Transverse colon (tissue), 4 donors: ENCODE measurements at regions of chr13 and their contacts with region 1.

Region 1: GRCh38 chr13:45047394-45048310 is 58.3 kb downstream of the GPALPP1 start:
- DNase-seq: peak; percentile 84
- H3K4me3 ChIP-seq: peak overlapping the region in 3 of 4 donors; percentile 34 to 53 (median 37)
- H3K27ac ChIP-seq: no peak overlapping the region
- H3K4me1 ChIP-seq: peaks cover 0 to 13% (median 4%) of the 10 kb centered on the region in 4 donors
- H3K27me3 ChIP-seq: no peaks in the 10 kb centered on the region
- CTCF ChIP-seq: peak; percentile 76 to 96 (median 86)
- EP300 ChIP-seq: no peak
- POLR2A ChIP-seq: no peak

Region 2: GRCh38 chr13:44938854-44939253 is 108.8 kb before region 1 on chr13:
- in situ Hi-C with region 1: no loop called
- intact Hi-C with region 1: no loop called
- DNase-seq: no peak
- H3K4me3 ChIP-seq: no peak overlapping the region
- H3K27ac ChIP-seq: no peak overlapping the region
- H3K4me1 ChIP-seq: no peaks in the 10 kb centered on the region
- H3K27me3 ChIP-seq: no peaks in the 10 kb centered on the region
- CTCF ChIP-seq: no peak
- EP300 ChIP-seq: no peak
- POLR2A ChIP-seq: no peak

Region 3: DNA sequence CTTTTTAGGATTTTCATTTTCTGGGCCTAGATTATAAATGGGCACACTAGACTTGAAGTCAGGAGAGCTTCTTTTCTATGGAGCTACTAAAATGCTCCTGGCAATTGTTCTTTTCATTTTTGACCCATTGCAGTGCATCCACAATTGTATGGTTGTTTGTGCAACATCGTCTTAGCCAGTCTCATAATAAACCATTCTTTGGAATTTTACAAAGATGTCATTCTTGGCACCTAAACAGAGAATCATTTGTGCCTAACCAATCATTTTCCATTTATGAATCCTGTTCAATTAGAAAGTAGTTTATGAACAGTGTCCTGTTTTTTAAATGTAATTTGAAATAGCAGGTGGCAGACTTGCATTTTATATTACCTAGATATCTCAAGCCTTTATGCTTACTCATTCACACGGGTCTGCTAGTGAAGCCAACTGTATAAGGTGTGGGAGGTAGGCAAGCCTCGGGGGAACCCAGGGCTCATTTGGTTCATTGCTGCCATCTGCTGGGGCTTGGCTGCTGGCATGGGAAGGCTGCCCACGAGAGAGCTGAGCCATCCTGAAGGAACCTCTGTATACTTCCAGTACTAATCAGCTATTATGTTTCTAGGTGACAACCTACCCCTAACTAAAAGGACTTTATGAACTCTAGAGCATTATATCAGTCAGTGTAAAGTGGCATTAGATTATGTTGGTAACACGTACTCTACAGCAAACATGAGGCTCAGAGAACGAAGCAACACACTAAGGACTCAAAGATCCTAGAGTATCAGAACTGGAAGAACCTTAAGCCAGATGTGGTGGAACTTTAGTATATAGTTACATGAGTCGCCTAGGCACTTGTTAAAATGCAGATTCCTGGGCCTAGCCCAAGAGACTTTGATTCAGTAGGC is 233.3 kb after region 1 on chr13:
- in situ Hi-C with region 1: loop called in 1 of 4 experiments (anchors 10 kb)
- intact Hi-C with region 1: no loop called
- DNase-seq: peak; percentile 83
- H3K4me3 ChIP-seq: no peak overlapping the region
- H3K27ac ChIP-seq: no peak overlapping the region
- H3K4me1 ChIP-seq: peaks cover 0 to 15% (median 2%) of the 10 kb centered on the region in 4 donors
- H3K27me3 ChIP-seq: no peaks in the 10 kb centered on the region
- CTCF ChIP-seq: peak; percentile 66 to 81 (median 74)
- EP300 ChIP-seq: no peak
- POLR2A ChIP-seq: no peak

Region 4: DNA sequence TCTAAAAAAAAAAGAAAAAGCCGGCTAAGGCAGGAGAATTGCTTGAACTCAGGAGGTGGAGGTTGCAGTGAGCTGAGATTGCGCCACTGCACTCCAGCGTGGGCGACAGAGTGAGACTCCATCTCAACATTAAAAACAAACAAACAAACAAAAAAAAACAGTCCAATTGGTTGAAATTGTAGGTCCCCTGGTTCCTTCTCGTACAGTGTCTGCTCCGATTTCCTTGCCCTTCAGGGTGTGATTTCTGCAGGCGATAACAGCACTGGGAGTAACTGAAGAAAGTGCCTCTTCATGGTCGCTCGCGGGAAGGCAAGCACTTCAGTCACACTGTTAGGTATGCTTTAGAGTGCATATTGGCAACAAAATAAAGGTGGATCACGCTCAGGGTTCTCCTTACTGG is 253.6 kb after region 1 on chr13:
- in situ Hi-C with region 1: loop called in 3 of 4 experiments (anchors 5 to 10 kb)
- intact Hi-C with region 1: no loop called
- DNase-seq: no peak
- H3K4me3 ChIP-seq: no peak overlapping the region
- H3K27ac ChIP-seq: no peak overlapping the region
- H3K4me1 ChIP-seq: no peaks in the 10 kb centered on the region
- H3K27me3 ChIP-seq: peaks cover 16% of the 10 kb centered on the region
- CTCF ChIP-seq: no peak
- EP300 ChIP-seq: no peak
- POLR2A ChIP-seq: no peak

Region 5: DNA sequence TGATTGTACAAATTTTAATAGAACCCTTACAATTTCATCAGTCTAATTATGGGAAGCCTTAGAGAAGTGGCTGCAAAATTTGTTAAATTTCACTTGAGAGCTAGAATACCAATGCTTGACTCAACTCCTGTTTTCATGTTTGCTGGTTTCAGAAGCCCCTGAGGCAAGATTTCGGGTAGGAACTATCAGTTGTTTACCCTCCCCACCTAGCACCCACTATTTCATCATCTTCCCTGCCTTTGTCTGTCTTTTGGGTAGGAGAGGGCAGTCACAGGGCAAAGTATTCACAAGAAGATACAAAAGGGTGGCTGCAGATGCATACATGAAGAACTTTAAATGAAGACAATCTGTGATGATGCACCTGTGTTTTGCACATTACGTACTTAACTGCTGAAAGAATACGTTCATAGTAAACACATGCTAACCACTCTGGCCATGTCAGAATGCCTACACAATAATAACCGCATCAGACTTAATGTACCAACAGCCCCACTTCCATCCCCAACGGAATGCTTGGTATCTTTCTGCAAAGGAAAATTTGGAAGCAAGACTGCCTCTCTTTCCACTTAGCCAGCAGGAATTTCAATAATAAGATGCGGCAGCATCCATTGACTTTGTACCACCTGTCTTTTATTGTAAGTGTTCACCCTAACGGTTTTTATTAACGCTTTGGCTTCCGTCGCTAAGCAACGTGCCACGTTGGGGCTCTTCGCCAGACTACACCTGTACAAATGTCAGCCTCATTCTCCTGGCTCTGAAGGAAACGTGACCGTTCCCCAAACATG is 262.9 kb after region 1 on chr13:
- in situ Hi-C with region 1: loop called in 3 of 4 experiments (anchors 5 to 10 kb)
- intact Hi-C with region 1: loop called (anchors 5 kb)
- DNase-seq: no peak
- H3K4me3 ChIP-seq: peak overlapping the region in 3 of 4 donors; percentile 33 to 52 (median 45)
- H3K27ac ChIP-seq: no peak overlapping the region
- H3K4me1 ChIP-seq: peaks cover 5 to 12% (median 10%) of the 10 kb centered on the region in 4 donors
- H3K27me3 ChIP-seq: no peaks in the 10 kb centered on the region
- CTCF ChIP-seq: no peak
- EP300 ChIP-seq: no peak
- POLR2A ChIP-seq: no peak